CD4-positive, alpha-beta T cell (primary cell): ENCODE measurements at regions of chr19 and their contacts with region 1.

Region 1: DNA sequence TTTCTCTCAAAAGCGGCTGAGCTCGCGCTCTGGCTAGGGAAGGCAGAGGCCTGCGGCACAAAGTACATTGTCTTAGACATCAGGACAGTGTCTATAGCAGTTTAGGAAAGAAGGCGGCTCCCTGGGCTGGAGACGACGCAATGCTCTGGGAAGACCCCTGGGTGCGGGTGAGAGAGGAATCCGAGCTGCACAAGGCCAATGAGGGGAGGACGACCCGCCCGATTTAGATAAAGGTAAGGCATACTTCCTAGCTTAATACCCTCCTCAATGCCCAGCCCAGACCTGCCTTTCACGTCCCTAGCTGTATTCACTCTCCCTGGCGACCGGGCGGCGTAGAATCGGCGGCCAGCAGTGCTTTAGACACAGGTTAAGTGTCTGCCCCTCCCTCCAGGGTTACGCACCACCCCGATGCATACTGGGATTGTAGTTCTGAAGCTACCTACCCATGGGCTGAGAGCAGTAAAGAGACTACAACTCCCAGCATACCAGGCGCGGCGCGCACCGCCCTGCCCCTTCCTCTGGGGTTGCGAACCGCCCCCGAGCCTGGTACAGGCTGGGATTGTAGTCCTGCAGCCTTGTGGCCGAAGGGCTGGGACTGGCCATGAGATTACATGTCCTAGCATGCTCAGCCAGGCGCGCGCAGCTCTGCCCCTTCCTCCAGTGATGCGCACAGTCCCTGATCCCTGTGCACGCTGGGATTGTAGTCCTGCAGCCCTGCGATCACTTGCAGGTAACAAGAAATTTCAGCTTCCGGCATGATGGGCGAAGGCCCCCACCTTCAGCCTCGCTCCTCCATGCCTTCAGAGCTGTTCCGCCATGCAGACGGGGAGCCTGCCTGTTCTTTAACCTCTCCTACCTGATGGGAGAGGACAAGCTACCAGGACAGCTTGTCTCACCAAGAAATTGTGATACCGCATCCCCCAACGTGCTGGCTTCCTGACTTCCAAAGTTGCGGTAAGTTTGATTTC is 43.4 kb upstream of the ZNF14 start:
- DNase-seq: peak; percentile 83 to 95 (median 88)
- ATAC-seq: peak; percentile 98
- H3K4me3 ChIP-seq: peak overlapping the region; percentile 85
- H3K4me3 Mint-ChIP-seq: peak overlapping the region; percentile 94
- H3K27ac ChIP-seq: peak overlapping the region; percentile 55 to 74
- H3K27ac Mint-ChIP-seq: peak overlapping the region; percentile 89
- H3K4me1 ChIP-seq: peaks cover 26% of the 10 kb centered on the region
- H3K4me1 Mint-ChIP-seq: peaks cover 50% of the 10 kb centered on the region
- H3K27me3 ChIP-seq: no peaks in the 10 kb centered on the region
- H3K27me3 Mint-ChIP-seq: no peaks in the 10 kb centered on the region
- CTCF ChIP-seq: no peak

Region 2: GRCh38 chr19:19515764-19516519 is 260.4 kb before region 1 on chr19 and contains the start of gene NDUFA13:
- CTCF ChIA-PET with region 1: no interaction called
- POLR2A ChIA-PET with region 1: no interaction called
- intact Hi-C with region 1: loop called in 1 of 2 experiments (anchors 5 kb)
- DNase-seq: peak; percentile 84 to 97 (median 92)
- ATAC-seq: peak; percentile 87
- H3K4me3 ChIP-seq: peak within 1 kb of the TSS; percentile 77
- H3K4me3 Mint-ChIP-seq: peak within 1 kb of the TSS; percentile 94
- H3K27ac ChIP-seq: peak within 1 kb of the TSS; percentile 76 to 87
- H3K27ac Mint-ChIP-seq: peak within 1 kb of the TSS; percentile 86
- H3K4me1 ChIP-seq: peaks cover 46% of the 10 kb centered on the region
- H3K4me1 Mint-ChIP-seq: peaks cover 32% of the 10 kb centered on the region
- H3K27me3 ChIP-seq: no peaks in the 10 kb centered on the region
- H3K27me3 Mint-ChIP-seq: no peaks in the 10 kb centered on the region
- CTCF ChIP-seq: no peak
- total RNA-seq, gene NDUFA13: 145 to 156 TPM

Region 3: DNA sequence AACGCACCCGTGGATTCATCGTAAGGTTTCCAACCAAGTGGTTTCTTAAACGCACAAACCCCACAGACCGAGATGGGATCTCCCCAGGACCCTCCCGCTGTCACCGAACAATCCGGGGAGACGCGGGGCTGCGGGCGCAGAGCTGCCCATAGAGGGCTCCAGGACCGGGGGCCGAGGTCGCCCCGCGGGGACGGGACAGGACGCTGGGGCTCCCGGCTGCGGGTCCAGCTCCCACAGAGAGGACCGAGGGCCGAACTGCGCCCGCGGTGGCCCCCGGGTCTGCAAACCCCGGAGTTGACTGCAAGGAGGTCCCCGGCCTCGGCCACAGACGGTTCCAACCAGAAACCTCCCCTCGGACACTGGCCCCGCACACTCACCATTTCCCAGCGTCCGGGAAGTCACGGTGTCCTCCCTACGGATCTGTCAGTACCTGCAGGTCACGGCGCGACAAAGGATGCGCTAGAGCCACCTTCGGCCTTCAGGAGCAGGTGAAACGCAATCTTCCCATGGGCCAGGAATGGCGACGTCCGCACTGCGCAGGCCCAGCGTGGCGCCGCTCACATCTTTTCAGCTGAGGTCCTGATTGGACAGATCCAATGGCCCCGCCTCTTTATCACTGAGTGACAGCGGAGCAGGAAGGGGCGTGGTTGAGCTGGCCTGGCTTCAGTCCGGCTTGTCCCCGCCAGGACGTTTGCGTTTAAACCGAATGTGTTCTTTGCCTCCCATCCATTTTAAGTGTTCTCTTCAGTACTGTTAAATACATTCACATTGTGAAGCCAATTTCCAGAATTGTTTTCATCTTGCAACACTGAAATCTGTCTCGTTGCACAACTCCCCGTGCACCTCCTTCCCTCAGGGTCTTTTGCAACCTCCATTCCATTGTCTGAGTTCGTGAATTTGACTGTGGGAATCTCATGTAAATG is 43.5 kb before region 1 on chr19 and contains the start of gene ZNF14:
- CTCF ChIA-PET with region 1: interaction called, 4 read pairs
- POLR2A ChIA-PET with region 1: interaction called, 42 read pairs
- intact Hi-C with region 1: loop called (anchors 2 to 5 kb)
- DNase-seq: peak; percentile 83 to 96 (median 88)
- ATAC-seq: peak; percentile 99
- H3K4me3 ChIP-seq: peak within 1 kb of the TSS; percentile 95
- H3K4me3 Mint-ChIP-seq: peak within 1 kb of the TSS; percentile 99
- H3K27ac ChIP-seq: peak within 1 kb of the TSS; percentile 69 to 79
- H3K27ac Mint-ChIP-seq: peak within 1 kb of the TSS; percentile 94
- H3K4me1 ChIP-seq: peaks cover 33% of the 10 kb centered on the region
- H3K4me1 Mint-ChIP-seq: peaks cover 27% of the 10 kb centered on the region
- H3K27me3 ChIP-seq: no peaks in the 10 kb centered on the region
- H3K27me3 Mint-ChIP-seq: no peaks in the 10 kb centered on the region
- CTCF ChIP-seq: no peak
- total RNA-seq, gene ZNF14: 36.9 to 37.3 TPM

Region 4: GRCh38 chr19:19821366-19821951 is 45.1 kb after region 1 on chr19 and contains the start of gene ZNF506:
- CTCF ChIA-PET with region 1: interaction called, 6 read pairs
- POLR2A ChIA-PET with region 1: interaction called, 99 read pairs
- intact Hi-C with region 1: loop called (anchors 1 to 5 kb)
- DNase-seq: peak; percentile 95 to 99 (median 97)
- ATAC-seq: peak; percentile 79
- H3K4me3 ChIP-seq: peak within 1 kb of the TSS; percentile 62
- H3K4me3 Mint-ChIP-seq: peak within 1 kb of the TSS; percentile 99
- H3K27ac ChIP-seq: peak within 1 kb of the TSS; percentile 97
- H3K27ac Mint-ChIP-seq: peak within 1 kb of the TSS; percentile 86
- H3K4me1 ChIP-seq: peaks cover 45% of the 10 kb centered on the region
- H3K4me1 Mint-ChIP-seq: peaks cover 44% of the 10 kb centered on the region
- H3K27me3 ChIP-seq: no peaks in the 10 kb centered on the region
- H3K27me3 Mint-ChIP-seq: no peaks in the 10 kb centered on the region
- CTCF ChIP-seq: no peak
- total RNA-seq, gene ZNF506: 48.0 to 50.7 TPM

Region 5: GRCh38 chr19:19871932-19872331 is 95.6 kb after region 1 on chr19:
- CTCF ChIA-PET with region 1: interaction called, 3 read pairs
- POLR2A ChIA-PET with region 1: interaction called, 54 read pairs
- intact Hi-C with region 1: no loop called
- DNase-seq: no peak
- ATAC-seq: no peak
- H3K4me3 ChIP-seq: no peak overlapping the region
- H3K4me3 Mint-ChIP-seq: peak overlapping the region; percentile 0
- H3K27ac ChIP-seq: no peak overlapping the region
- H3K27ac Mint-ChIP-seq: peak overlapping the region; percentile 75
- H3K4me1 ChIP-seq: peaks cover 13% of the 10 kb centered on the region
- H3K4me1 Mint-ChIP-seq: peaks cover 57% of the 10 kb centered on the region
- H3K27me3 ChIP-seq: no peaks in the 10 kb centered on the region
- H3K27me3 Mint-ChIP-seq: no peaks in the 10 kb centered on the region
- CTCF ChIP-seq: no peak